Esophagus muscularis mucosa (tissue), 4 donors: ENCODE measurements at regions of chr15 and their contacts with region 1.

Region 1: GRCh38 chr15:42444415-42445063 is 46.4 kb downstream of the ZNF106 start:
- DNase-seq: no peak
- H3K4me3 ChIP-seq: no peak overlapping the region
- H3K27ac ChIP-seq: no peak overlapping the region
- H3K4me1 ChIP-seq: peaks cover 0 to 15% (median 6%) of the 10 kb centered on the region in 4 donors
- H3K27me3 ChIP-seq: no peaks in the 10 kb centered on the region
- CTCF ChIP-seq: no peak
- EP300 ChIP-seq: no peak
- POLR2A ChIP-seq: no peak

Region 2: GRCh38 chr15:42184296-42184695 is 260.2 kb before region 1 on chr15:
- intact Hi-C with region 1: no loop called
- DNase-seq: no peak
- H3K4me3 ChIP-seq: no peak overlapping the region
- H3K27ac ChIP-seq: no peak overlapping the region
- H3K4me1 ChIP-seq: no peaks in the 10 kb centered on the region
- H3K27me3 ChIP-seq: no peaks in the 10 kb centered on the region
- CTCF ChIP-seq: no peak
- EP300 ChIP-seq: no peak
- POLR2A ChIP-seq: no peak

Region 3: GRCh38 chr15:42523331-42523730 is 78.8 kb after region 1 on chr15:
- intact Hi-C with region 1: no loop called
- DNase-seq: no peak
- H3K4me3 ChIP-seq: no peak overlapping the region
- H3K27ac ChIP-seq: no peak overlapping the region
- H3K4me1 ChIP-seq: no peaks in the 10 kb centered on the region
- H3K27me3 ChIP-seq: no peaks in the 10 kb centered on the region
- CTCF ChIP-seq: no peak
- EP300 ChIP-seq: no peak
- POLR2A ChIP-seq: no peak

Region 4: DNA sequence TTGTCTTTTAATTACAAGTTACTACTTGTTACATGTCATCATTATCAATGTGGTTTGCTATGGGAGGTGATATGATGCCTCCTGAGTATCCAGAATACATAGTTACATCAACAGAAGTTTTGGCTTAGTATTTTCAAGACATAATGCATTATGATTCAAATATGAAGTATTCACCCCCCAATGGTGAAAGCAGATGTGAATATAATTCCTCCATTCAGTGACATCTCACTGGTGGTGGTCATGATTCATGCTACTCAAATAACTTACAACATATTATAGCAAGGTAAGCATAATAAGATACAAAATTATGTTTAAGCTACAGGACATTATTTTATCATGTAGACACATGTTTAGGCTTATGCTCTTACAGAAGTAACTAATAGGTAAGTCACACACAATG is 511.0 kb after region 1 on chr15:
- intact Hi-C with region 1: loop called (anchors 10 kb)
- DNase-seq: no peak
- H3K4me3 ChIP-seq: no peak overlapping the region
- H3K27ac ChIP-seq: no peak overlapping the region
- H3K4me1 ChIP-seq: peaks cover 0 to 4% (median 0%) of the 10 kb centered on the region in 4 donors
- H3K27me3 ChIP-seq: no peaks in the 10 kb centered on the region
- CTCF ChIP-seq: no peak
- EP300 ChIP-seq: no peak
- POLR2A ChIP-seq: no peak